Activated CD8-positive, alpha-beta T cell treated with anti-CD3 and anti-CD28 coated beads for 36 hours (primary cell): ENCODE measurements at regions of chr15 and their contacts with region 1.

Region 1: DNA sequence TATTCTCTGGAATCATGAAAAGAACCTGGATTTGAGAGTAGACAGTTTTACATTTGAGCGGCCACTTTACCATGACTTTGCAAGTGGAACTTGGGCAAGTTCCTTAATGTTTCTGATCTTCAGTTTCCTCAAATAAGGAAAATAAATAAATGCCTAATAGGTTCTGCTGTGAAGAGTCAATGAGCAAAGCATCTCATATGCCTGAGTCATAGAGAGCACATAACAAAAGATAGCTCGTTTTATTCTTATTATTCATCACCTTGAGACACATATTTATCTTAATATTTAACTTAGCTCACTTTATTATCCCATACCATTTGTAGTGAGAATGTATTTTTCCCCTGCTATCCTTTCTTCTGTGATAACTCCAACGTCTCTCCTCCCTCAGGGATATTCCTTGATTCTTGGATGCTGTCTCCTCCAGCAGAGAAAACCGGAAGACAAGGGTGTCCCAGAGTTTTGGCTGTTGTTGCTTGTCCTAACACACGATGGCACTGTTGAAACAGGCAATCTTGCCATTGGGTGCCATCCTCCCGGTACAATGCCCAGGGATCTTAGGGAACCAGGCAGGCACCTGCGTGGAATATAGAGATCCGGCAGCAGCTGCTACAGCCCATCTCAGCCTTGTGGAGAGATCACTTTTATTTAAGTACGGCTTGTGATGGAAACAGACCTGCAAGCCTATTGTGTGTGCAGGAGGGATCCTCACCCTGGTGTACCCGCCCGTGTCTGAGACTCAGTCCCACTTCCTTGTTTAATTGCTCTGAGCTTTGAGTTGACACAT is 33.3 kb upstream of the VPS33B start:
- DNase-seq: peak; percentile 54
- ATAC-seq: peak; percentile 47
- H3K4me3 Mint-ChIP-seq: no peak overlapping the region
- H3K27ac Mint-ChIP-seq: no peak overlapping the region
- H3K4me1 Mint-ChIP-seq: no peaks in the 10 kb centered on the region
- H3K27me3 Mint-ChIP-seq: peaks cover 38% of the 10 kb centered on the region
- CTCF ChIP-seq: peak; percentile 87

Region 2: DNA sequence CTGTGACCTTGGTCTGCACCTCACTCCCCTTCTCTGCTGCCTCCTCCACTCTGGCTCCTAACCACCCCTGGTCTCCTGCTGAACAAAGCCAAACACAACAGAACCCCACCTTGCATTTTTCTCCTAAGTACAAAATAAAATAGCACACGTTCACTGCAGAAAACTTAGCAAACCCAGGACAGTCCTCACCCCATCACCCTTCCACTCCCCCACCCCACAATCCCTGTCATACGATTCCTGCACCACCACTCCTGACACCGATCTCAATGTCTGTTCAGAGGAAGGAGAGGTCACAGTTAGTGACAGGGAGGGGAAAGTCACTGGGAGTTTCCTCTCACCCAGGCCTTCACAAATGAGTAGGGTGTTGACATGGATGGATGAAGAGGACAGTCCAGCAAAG is 37.6 kb before region 1 on chr15:
- CTCF ChIA-PET with region 1: no interaction called
- POLR2A ChIA-PET with region 1: no interaction called
- intact Hi-C with region 1: no loop called
- DNase-seq: no peak
- ATAC-seq: no peak
- H3K4me3 Mint-ChIP-seq: no peak overlapping the region
- H3K27ac Mint-ChIP-seq: peak overlapping the region; percentile 11
- H3K4me1 Mint-ChIP-seq: peaks cover 30% of the 10 kb centered on the region
- H3K27me3 Mint-ChIP-seq: no peaks in the 10 kb centered on the region
- CTCF ChIP-seq: no peak

Region 3: GRCh38 chr15:91032919-91033803 is 22.6 kb before region 1 on chr15:
- CTCF ChIA-PET with region 1: interaction called, 10 read pairs
- POLR2A ChIA-PET with region 1: no interaction called
- intact Hi-C with region 1: no loop called
- DNase-seq: peak; percentile 76
- ATAC-seq: peak; percentile 89
- H3K4me3 Mint-ChIP-seq: no peak overlapping the region
- H3K27ac Mint-ChIP-seq: no peak overlapping the region
- H3K4me1 Mint-ChIP-seq: no peaks in the 10 kb centered on the region
- H3K27me3 Mint-ChIP-seq: no peaks in the 10 kb centered on the region
- CTCF ChIP-seq: peak; percentile 61

Region 4: GRCh38 chr15:91067026-91067425 is 11.3 kb after region 1 on chr15:
- CTCF ChIA-PET with region 1: interaction called, 14 read pairs
- POLR2A ChIA-PET with region 1: no interaction called
- intact Hi-C with region 1: no loop called
- DNase-seq: no peak
- ATAC-seq: no peak
- H3K4me3 Mint-ChIP-seq: no peak overlapping the region
- H3K27ac Mint-ChIP-seq: no peak overlapping the region
- H3K4me1 Mint-ChIP-seq: no peaks in the 10 kb centered on the region
- H3K27me3 Mint-ChIP-seq: peaks cover 6% of the 10 kb centered on the region
- CTCF ChIP-seq: no peak

Region 5: DNA sequence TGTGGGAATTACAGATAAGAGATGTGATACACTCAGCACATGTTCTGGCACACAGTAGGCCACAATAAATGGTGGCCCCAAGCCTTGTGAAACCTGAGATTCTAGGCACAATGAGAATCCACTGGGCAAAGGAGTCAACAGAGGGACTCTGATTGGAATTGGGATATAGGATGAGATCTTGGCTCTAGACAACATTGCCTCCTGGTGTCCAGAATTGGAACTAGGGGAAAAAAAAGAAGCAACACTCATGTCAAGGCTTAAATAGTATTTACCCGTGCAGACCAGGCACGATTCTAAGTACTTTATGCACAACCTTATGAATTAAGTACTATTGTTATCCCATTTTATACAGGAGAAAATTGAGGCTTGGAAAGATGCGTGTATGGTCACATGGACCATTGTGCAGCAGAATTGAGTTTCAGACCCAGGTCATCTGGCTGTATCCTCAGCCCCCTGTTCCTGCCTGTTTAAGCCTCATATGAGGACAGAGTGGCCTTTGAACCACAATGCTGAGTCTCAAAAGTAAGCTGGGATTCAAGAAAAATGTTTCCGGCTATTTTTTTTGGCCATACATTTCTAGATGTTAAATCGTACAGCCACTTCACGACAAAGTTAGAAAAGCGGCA is 169.1 kb after region 1 on chr15:
- CTCF ChIA-PET with region 1: interaction called, 42 read pairs
- POLR2A ChIA-PET with region 1: no interaction called
- intact Hi-C with region 1: no loop called
- DNase-seq: no peak
- ATAC-seq: no peak
- H3K4me3 Mint-ChIP-seq: no peak overlapping the region
- H3K27ac Mint-ChIP-seq: no peak overlapping the region
- H3K4me1 Mint-ChIP-seq: no peaks in the 10 kb centered on the region
- H3K27me3 Mint-ChIP-seq: peaks cover 30% of the 10 kb centered on the region
- CTCF ChIP-seq: peak; percentile 70

Region 6: DNA sequence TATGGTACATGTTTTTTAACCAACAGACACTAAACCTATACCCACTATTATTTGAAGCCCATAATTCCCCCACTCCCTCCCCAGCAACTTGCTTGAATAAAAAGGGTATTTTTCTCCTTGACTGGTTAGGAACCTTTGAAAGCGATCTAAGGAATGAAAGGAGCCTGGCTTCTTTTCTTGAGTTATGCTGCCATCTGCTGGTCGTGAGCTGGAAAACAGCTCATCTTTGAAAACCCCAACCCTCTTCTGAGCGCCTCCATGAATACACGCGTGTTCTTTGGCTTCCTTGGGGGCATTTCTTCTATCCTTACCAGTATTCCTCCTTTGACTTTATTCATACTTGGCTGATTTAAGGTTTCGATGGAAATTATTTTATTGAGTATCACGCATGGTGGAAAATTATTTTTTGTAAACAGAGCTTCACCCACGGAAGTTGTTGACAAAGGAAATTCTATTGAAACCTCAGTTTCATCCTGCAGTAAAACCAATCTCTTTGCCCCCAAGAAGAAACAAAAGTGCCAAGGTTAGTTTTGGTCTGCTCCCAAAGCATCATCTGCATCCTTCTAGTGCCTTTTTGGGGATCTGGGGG is 215.9 kb after region 1 on chr15:
- CTCF ChIA-PET with region 1: interaction called, 82 read pairs
- POLR2A ChIA-PET with region 1: interaction called, 4 read pairs
- intact Hi-C with region 1: loop called (anchors 2 kb)
- DNase-seq: peak; percentile 66
- ATAC-seq: peak; percentile 67
- H3K4me3 Mint-ChIP-seq: peak overlapping the region; percentile 13
- H3K27ac Mint-ChIP-seq: no peak overlapping the region
- H3K4me1 Mint-ChIP-seq: no peaks in the 10 kb centered on the region
- H3K27me3 Mint-ChIP-seq: peaks cover 20% of the 10 kb centered on the region
- CTCF ChIP-seq: peak; percentile 80